Activated CD4-positive, alpha-beta T cell treated with anti-CD3 and anti-CD28 coated beads, Interleukin-2, amount 10 ng/mL, durations not matched to agents 24 days and 14 days (primary cell): ENCODE measurements at regions of chr2 and their contacts with region 1.

Region 1: GRCh38 chr2:53970724-53971602 is at the start of gene PSME4:
- DNase-seq: peak; percentile 98
- H3K4me3 Mint-ChIP-seq: peak within 1 kb of the TSS; percentile 93
- H3K27ac Mint-ChIP-seq: peak within 1 kb of the TSS; percentile 97
- H3K4me1 Mint-ChIP-seq: peaks cover 28% of the 10 kb centered on the region
- H3K27me3 Mint-ChIP-seq: no peaks in the 10 kb centered on the region
- total RNA-seq, gene PSME4: 49.6 and 52.1 TPM in 2 replicates

Region 2: GRCh38 chr2:53767405-53768241 is 203.3 kb before region 1 on chr2 and contains the start of gene CHAC2:
- intact Hi-C with region 1: loop called (anchors 2 kb)
- DNase-seq: peak; percentile 96
- H3K4me3 Mint-ChIP-seq: peak within 1 kb of the TSS; percentile 92
- H3K27ac Mint-ChIP-seq: peak within 1 kb of the TSS; percentile 98
- H3K4me1 Mint-ChIP-seq: peaks cover 24% of the 10 kb centered on the region
- H3K27me3 Mint-ChIP-seq: no peaks in the 10 kb centered on the region
- total RNA-seq, gene CHAC2: 24.8 and 27.4 TPM in 2 replicates

Region 3: DNA sequence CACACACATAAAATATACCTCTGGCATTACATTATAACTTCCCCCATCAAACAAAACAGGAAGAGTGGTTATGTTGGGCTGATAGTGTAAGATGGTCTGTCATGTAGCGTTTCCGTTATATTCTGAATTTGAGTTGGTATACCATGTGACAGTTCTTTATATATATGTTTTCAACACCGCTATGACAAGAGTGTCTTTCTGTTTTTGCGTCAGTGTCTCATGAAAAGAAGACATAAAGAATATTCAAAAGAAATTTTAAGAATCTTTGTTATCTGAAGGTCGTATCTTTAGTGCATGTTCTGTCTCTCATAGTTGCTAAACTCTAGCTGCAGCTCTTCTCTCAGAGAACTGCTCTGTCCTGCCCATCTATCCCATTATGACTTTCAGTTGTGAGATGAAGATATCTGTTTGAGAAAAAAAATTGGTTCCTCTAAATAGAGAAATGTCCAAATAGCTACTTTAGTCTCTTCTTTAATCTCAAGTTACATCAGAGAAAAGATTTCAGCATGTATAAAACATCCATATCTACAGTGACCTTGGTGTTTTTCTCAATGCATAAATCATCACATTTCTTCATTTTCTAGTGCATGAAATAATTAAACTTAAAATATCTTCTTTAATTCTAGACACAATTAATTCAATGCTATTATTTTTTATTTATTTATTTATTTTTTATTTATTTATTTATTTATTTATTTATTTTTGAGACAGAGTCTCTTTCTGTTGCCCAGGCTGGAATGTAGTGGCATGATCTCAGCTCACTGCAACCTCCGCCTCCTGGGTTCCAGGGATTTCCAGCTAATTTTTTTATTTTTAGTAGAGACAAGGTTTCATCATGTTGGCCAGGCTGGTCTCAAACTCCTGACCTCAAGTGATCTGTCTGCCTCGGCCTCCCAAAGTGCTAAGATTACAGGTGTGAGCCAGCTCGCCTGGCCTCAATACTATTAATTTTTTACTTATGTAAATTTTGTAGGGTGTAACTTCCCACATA is 24.1 kb after region 1 on chr2:
- intact Hi-C with region 1: loop called (anchors 2 kb)
- DNase-seq: peak; percentile 69
- H3K4me3 Mint-ChIP-seq: peak overlapping the region; percentile 58
- H3K27ac Mint-ChIP-seq: peak overlapping the region; percentile 68
- H3K4me1 Mint-ChIP-seq: peaks cover 20% of the 10 kb centered on the region
- H3K27me3 Mint-ChIP-seq: no peaks in the 10 kb centered on the region

Region 4: GRCh38 chr2:54115284-54116137 is 144.5 kb after region 1 on chr2 and contains the start of gene ACYP2:
- intact Hi-C with region 1: loop called (anchors 1 kb)
- DNase-seq: peak; percentile 97
- H3K4me3 Mint-ChIP-seq: peak within 1 kb of the TSS; percentile 98
- H3K27ac Mint-ChIP-seq: peak within 1 kb of the TSS; percentile 100
- H3K4me1 Mint-ChIP-seq: peaks cover 17% of the 10 kb centered on the region
- H3K27me3 Mint-ChIP-seq: peaks cover 9% of the 10 kb centered on the region
- total RNA-seq, gene ACYP2: 4.0 and 5.9 TPM in 2 replicates